Activated B cell treated with CpG ODN at 0.5 μM for 24 hours (primary cell): ENCODE measurements at regions of chr19 and their contacts with region 1.

Region 1: DNA sequence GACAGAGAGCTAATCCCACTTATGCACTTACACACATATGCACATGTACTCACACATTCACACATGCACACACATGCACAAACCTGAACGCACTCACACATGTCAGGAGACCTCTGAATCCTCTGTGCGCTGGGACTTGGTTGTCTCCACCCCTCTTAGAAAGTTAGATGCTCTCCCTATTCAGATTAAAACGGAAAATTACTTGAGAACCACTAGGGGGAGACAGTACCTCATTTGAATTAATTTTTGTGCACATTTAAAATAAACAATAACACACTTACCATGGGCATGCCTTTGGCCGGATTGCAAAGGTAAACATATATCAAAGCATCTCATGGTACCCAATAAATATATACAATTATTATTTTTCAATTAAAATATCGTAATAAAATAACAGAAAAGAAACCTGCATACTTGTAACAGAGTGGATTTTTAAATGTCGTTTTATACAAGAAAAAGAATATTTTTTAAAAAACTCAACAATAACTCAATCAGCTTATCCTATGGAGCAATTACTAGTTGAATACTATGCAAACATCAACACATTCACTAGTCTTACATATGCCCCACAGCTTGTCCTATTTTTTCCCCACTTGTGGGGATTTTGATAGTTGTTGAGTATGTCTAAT is 9.5 kb upstream of the LILRB4 start:
- DNase-seq: no peak
- ATAC-seq: peak; percentile 42
- H3K4me3 Mint-ChIP-seq: no peak overlapping the region
- H3K27ac Mint-ChIP-seq: no peak overlapping the region
- H3K4me1 Mint-ChIP-seq: peaks cover 12% of the 10 kb centered on the region
- H3K27me3 Mint-ChIP-seq: no peaks in the 10 kb centered on the region
- CTCF ChIP-seq: peak; percentile 88

Region 2: DNA sequence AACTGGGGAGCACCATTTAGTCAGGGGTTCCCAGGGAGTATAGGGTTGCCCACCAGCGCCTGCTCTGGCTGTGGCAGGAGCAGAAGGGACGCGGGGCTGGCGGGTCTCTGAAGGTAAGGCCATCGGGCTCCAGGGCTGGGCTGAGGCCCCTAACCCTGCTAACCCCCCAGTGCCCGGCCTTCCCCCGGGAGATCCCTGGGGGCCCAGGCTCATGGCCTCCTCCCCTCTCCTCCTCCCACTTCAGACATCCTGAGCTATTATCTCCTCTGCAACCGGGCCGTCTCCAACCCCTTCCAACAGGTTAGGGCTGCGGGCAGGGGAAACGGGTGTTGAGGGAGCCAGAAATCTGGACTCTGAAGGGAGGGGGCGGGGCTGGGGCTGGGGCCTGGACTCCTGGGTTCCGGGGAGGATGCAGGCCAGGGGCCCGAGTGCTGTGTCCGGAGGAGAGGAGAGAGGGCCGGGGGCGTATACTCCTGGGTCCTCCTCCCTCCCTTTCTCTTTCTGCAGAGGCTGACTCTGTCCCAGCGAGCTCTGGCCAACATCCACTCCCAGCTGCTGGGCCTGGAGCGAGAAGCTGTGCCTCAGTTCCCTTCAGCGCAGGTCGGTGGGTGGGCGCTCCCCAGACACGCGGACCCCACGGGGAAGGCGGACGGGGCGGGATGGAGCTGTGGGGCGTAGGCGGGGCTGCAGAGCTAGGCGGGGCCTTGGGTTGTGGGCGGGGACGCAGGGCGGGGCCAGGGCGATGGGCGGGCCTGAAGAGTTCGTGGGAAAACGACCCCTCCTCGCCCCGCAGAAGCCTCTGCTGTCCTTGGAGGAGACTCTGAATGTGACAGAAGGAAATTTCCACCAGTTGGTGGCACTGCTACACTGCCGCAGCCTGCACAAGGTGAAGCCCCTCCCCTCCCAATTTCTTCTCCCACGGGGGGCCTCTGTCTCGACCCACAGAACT is 222.7 kb before region 1 on chr19:
- CTCF ChIA-PET with region 1: no interaction called
- POLR2A ChIA-PET with region 1: no interaction called
- intact Hi-C with region 1: no loop called
- DNase-seq: peak; percentile 34
- ATAC-seq: peak; percentile 93
- H3K4me3 Mint-ChIP-seq: peak overlapping the region; percentile 58
- H3K27ac Mint-ChIP-seq: no peak overlapping the region
- H3K4me1 Mint-ChIP-seq: peaks cover 20% of the 10 kb centered on the region
- H3K27me3 Mint-ChIP-seq: peaks cover 23% of the 10 kb centered on the region
- CTCF ChIP-seq: no peak

Region 3: GRCh38 chr19:54674021-54674617 is 20.8 kb after region 1 on chr19:
- CTCF ChIA-PET with region 1: interaction called, 114 read pairs
- POLR2A ChIA-PET with region 1: no interaction called
- intact Hi-C with region 1: loop called (anchors 1 kb)
- DNase-seq: no peak
- ATAC-seq: no peak
- H3K4me3 Mint-ChIP-seq: no peak overlapping the region
- H3K27ac Mint-ChIP-seq: no peak overlapping the region
- H3K4me1 Mint-ChIP-seq: no peaks in the 10 kb centered on the region
- H3K27me3 Mint-ChIP-seq: peaks cover 15% of the 10 kb centered on the region
- CTCF ChIP-seq: no peak

Region 4: GRCh38 chr19:54916822-54917221 is 263.5 kb after region 1 on chr19:
- CTCF ChIA-PET with region 1: no interaction called
- POLR2A ChIA-PET with region 1: no interaction called
- intact Hi-C with region 1: loop called (anchors 2 kb)
- DNase-seq: no peak
- ATAC-seq: no peak
- H3K4me3 Mint-ChIP-seq: no peak overlapping the region
- H3K27ac Mint-ChIP-seq: no peak overlapping the region
- H3K4me1 Mint-ChIP-seq: peaks cover 3% of the 10 kb centered on the region
- H3K27me3 Mint-ChIP-seq: peaks cover 14% of the 10 kb centered on the region
- CTCF ChIP-seq: no peak